ENCODE measurements at regions of chrX and their contacts with region 1.

Region 1: DNA sequence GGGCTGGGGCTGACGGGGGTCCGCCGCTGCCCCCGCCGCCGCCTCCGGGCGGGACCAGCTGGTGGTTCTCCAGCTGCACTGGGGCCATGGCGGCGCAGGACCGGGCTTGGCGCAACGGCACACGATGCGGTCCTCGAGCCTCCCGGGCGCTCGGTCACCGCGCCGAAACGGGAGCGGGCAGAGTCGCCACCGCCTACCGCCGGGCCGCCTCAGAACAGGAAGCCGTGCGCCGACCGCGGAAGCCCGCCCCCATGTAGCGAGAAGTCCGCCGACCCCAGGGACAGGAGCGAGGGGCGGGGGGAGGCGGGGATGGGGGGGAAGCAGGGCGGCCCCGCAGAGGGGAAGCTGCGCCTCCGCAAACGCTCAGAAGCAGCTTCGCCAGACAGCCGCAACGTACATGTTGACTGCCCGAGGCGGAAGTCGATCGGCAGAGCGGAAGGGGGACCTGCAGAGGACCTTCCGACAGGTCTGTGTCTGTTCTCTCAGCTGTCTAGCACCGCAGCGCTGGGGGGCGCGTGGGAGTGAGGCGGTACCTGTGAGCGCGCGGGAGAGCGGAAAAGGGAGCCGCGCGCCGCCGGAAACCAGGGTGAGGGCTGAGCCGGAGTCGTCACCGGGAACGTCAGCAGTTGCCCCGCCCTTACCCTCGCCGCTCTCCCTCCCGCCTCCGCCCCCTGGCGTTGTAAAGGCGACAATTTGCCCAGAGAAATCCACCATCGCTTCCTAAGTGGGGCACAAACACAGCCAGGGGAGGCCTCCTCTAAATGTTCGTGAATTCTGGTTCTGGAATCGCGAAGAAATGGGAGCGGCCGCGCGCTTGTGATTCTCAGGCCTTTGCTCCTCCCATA is at the start of gene MED14:
- DNase-seq: peak; percentile 81 to 91 (median 87)
- H3K4me3 ChIP-seq: peak within 1 kb of the TSS; percentile 51 to 90 (median 76)
- H3K27ac ChIP-seq: peak within 1 kb of the TSS; percentile 63 to 96 (median 92)
- H3K27me3 ChIP-seq: peaks cover 0 to 89% (median 18%) of the 10 kb centered on the region in 45 donors
- CTCF ChIP-seq: peak in 51 of 56 donors; percentile 24 to 77 (median 54)
- total RNA-seq, gene MED14: 28.9 to 65.1 (median 44.6) TPM

Region 2: GRCh38 chrX:40580537-40581335 is 154.8 kb before region 1 on chrX and contains the start of gene ATP6AP2:
- intact Hi-C with region 1: loop called in 1 of 2 experiments (anchors 5 kb)
- DNase-seq: peak; percentile 82 to 95 (median 92)
- H3K4me3 ChIP-seq: peak within 1 kb of the TSS; percentile 40 to 85 (median 71)
- H3K27ac ChIP-seq: peak within 1 kb of the TSS in 56 of 59 donors; percentile 15 to 88 (median 80)
- H3K27me3 ChIP-seq: peaks cover 0 to 79% (median 10%) of the 10 kb centered on the region in 45 donors
- CTCF ChIP-seq: no peak
- total RNA-seq, gene ATP6AP2: 86.2 to 263 (median 179) TPM

Region 3: DNA sequence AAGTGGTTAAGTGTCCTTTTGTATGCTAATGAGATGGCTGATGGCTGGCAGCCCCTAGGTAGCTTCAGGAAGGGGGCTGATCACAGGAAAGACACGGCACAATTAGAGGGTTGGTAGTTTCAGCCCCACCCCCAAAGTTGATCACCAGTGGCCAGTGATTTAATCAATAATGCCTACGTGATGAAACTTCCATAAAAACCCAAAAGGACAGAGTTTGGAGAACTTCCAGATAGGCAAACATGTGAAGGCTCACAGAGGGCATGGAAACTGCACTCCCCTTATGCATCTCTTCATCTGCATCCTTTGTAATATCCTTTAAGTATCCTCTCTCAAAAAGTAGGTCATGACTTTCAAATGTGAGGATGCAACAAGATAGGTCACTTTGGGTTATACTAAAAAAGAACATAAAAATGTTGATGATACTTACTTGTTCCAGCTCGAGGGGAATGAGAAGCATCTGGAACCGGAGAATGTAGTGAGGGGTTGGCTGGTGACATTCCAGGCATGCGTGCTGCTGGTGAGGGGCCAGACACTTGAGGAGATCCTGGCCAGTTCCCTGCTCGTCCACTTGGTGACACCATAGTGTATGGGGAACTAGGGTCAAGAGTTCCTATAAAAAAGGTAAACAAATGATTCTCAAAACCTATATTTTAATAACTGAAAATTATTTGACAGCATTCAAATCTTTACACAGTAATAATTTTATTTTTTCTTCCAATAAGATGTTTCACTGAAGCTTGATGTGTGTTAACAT is 71.5 kb before region 1 on chrX:
- intact Hi-C with region 1: loop called (anchors 5 kb)
- DNase-seq: no peak
- H3K4me3 ChIP-seq: no peak overlapping the region
- H3K27ac ChIP-seq: peak overlapping the region in 3 of 59 donors; percentile 2 to 28 (median 18)
- H3K27me3 ChIP-seq: peaks cover 0 to 54% (median 8%) of the 10 kb centered on the region in 45 donors
- CTCF ChIP-seq: peak in 47 of 56 donors; percentile 7 to 63 (median 45)

Region 4: GRCh38 chrX:41084044-41084892 is 348.7 kb after region 1 on chrX:
- intact Hi-C with region 1: loop called in 1 of 2 experiments (anchors 2 kb)
- DNase-seq: peak; percentile 93 to 96 (median 94)
- H3K4me3 ChIP-seq: peak overlapping the region; percentile 45 to 99 (median 93)
- H3K27ac ChIP-seq: peak overlapping the region; percentile 92 to 99 (median 98)
- H3K27me3 ChIP-seq: peaks cover 0 to 8% (median 0%) of the 10 kb centered on the region in 45 donors
- CTCF ChIP-seq: peak in 15 of 56 donors; percentile 5 to 35 (median 16)